ENCODE measurements at regions of chr14 and their contacts with region 1.

Region 1: GRCh38 chr14:22472935-22473854 is 115.8 kb downstream of the DAD1 start:
- DNase-seq: peak in 36 of 42 donors; percentile 19 to 89 (median 65)

Region 2: DNA sequence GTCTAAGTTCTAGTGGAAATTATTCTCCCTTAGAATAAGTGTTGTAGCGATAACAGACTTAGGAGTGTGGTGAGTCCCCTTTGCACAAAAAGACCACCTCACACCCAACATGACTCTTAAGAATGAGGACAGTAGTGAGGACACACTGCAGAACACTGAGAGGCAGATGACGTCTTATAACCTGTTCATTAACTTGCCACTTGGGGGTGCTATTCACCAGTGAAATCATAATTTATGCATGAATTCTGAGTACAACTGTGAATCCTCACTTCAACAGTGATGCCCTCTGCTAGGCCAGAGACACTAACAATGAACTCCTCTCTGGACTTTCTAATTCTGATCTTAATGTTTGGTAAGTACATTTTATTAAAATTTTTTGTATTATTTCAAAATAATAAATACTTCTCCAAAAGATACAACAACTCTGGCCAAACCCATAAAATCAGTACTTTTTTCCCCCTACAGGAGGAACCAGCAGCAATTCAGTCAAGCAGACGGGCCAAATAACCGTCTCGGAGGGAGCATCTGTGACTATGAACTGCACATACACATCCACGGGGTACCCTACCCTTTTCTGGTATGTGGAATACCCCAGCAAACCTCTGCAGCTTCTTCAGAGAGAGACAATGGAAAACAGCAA is 158.9 kb before region 1 on chr14:
- intact Hi-C with region 1: loop called (anchors 10 kb)
- DNase-seq: peak in 20 of 42 donors; percentile 13 to 83 (median 47)

Region 3: GRCh38 chr14:22448905-22449599 is 24.1 kb before region 1 on chr14:
- intact Hi-C with region 1: no loop called
- DNase-seq: peak in 1 of 42 donors; percentile 38

Region 4: GRCh38 chr14:22726012-22726411 is 252.8 kb after region 1 on chr14:
- intact Hi-C with region 1: no loop called
- DNase-seq: no peak

Measured in head of caudate nucleus (tissue), 42 donors.